ENCODE measurements at regions of chr11 and their contacts with region 1.

Region 1: GRCh38 chr11:126194121-126194543 is 17.3 kb downstream of the RPUSD4 start:
- DNase-seq: peak; percentile 37
- H3K4me3 Mint-ChIP-seq: no peak overlapping the region
- H3K27ac Mint-ChIP-seq: no peak overlapping the region
- H3K4me1 Mint-ChIP-seq: no peaks in the 10 kb centered on the region
- H3K27me3 Mint-ChIP-seq: no peaks in the 10 kb centered on the region
- CTCF ChIP-seq: peak; percentile 38

Region 2: GRCh38 chr11:125923012-125923579 is 271.0 kb before region 1 on chr11:
- CTCF ChIA-PET with region 1: interaction called, 7 read pairs
- intact Hi-C with region 1: loop called (anchors 1 kb)
- DNase-seq: peak; percentile 52
- H3K4me3 Mint-ChIP-seq: no peak overlapping the region
- H3K27ac Mint-ChIP-seq: no peak overlapping the region
- H3K4me1 Mint-ChIP-seq: no peaks in the 10 kb centered on the region
- H3K27me3 Mint-ChIP-seq: peaks cover 47% of the 10 kb centered on the region
- CTCF ChIP-seq: peak; percentile 51

Region 3: DNA sequence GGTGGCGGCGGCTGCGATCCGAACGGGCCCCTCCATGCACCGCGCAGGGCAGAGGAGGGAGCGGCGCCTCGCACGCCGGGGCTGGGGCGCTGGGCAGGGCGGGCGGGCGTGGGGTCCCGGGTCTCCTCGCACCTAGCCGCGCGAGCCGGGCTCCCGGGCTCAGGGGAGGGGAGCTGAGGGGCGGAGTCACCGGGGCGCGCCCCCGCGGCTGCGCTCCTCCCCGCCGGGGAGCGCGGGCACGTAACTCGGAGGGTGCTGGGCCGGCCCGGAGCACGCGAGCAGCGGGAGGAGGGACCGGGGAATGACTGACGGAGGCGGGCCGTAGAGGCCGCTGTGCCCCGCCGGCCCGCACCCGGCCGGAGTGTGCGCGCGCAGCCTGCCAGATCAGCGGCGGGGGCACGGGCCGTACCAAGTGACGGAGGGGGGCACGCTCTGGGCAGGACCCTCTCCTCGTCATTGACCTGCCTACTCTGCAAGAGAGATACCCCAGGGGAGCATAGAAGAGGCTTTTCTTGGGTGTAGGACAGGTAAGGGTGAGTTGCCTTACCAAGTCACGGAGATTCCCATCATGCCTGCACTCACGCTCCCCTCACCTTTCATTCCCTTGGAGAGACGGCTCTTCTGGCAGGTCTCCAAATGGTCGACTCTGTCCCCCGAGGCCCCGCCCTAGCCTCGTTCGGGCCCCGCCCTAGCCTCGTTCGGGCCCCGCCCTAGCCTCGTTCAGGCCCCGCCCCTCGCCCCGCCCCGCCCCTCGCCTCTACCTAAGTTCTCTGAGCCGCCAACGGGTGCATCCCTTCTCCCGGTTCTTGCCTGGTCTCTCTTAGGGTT is 131.2 kb before region 1 on chr11 and contains the start of gene CDON:
- CTCF ChIA-PET with region 1: interaction called, 6 read pairs
- intact Hi-C with region 1: loop called (anchors 5 kb)
- DNase-seq: peak; percentile 90
- H3K4me3 Mint-ChIP-seq: peak within 1 kb of the TSS; percentile 81
- H3K27ac Mint-ChIP-seq: peak within 1 kb of the TSS; percentile 96
- H3K4me1 Mint-ChIP-seq: peaks cover 8% of the 10 kb centered on the region
- H3K27me3 Mint-ChIP-seq: no peaks in the 10 kb centered on the region
- CTCF ChIP-seq: no peak
- total RNA-seq, gene CDON: 10.6 and 14.8 TPM in 2 replicates

Measured in Calu3 (cell line).